ENCODE measurements at regions of chr18 and their contacts with region 1.

Region 1: GRCh38 chr18:45621061-45621511 is 5.8 kb downstream of the SLC14A2 start:
- DNase-seq: peak in 13 of 14 experiments; percentile 2 to 67 (median 23)
- ATAC-seq: peak; percentile 55
- H3K4me3 ChIP-seq: no peak overlapping the region
- H3K4me3 Mint-ChIP-seq: no peak overlapping the region
- H3K27ac ChIP-seq: no peak overlapping the region
- H3K27ac Mint-ChIP-seq: no peak overlapping the region
- H3K4me1 ChIP-seq: no peaks in the 10 kb centered on the region
- H3K4me1 Mint-ChIP-seq: no peaks in the 10 kb centered on the region
- H3K27me3 ChIP-seq: peaks cover 0 to 2% of the 10 kb centered on the region in 2 experiments
- H3K27me3 Mint-ChIP-seq: no peaks in the 10 kb centered on the region
- CTCF ChIP-seq: peak; percentile 90

Region 2: GRCh38 chr18:45639408-45639807 is 18.3 kb after region 1 on chr18:
- CTCF ChIA-PET with region 1: no interaction called
- POLR2A ChIA-PET with region 1: no interaction called
- intact Hi-C with region 1: no loop called
- DNase-seq: no peak
- ATAC-seq: no peak
- H3K4me3 ChIP-seq: no peak overlapping the region
- H3K4me3 Mint-ChIP-seq: no peak overlapping the region
- H3K27ac ChIP-seq: no peak overlapping the region
- H3K27ac Mint-ChIP-seq: no peak overlapping the region
- H3K4me1 ChIP-seq: no peaks in the 10 kb centered on the region
- H3K4me1 Mint-ChIP-seq: no peaks in the 10 kb centered on the region
- H3K27me3 ChIP-seq: no peaks in the 10 kb centered on the region
- H3K27me3 Mint-ChIP-seq: peaks cover 5% of the 10 kb centered on the region
- CTCF ChIP-seq: no peak

Region 3: GRCh38 chr18:45879681-45880655 is 258.9 kb after region 1 on chr18:
- CTCF ChIA-PET with region 1: interaction called, 6 read pairs
- POLR2A ChIA-PET with region 1: no interaction called
- intact Hi-C with region 1: loop called in 1 of 2 experiments (anchors 2 kb)
- DNase-seq: peak; percentile 39 to 84 (median 69)
- ATAC-seq: peak; percentile 96
- H3K4me3 ChIP-seq: no peak overlapping the region
- H3K4me3 Mint-ChIP-seq: no peak overlapping the region
- H3K27ac ChIP-seq: no peak overlapping the region
- H3K27ac Mint-ChIP-seq: peak overlapping the region; percentile 2
- H3K4me1 ChIP-seq: peaks cover 10% of the 10 kb centered on the region
- H3K4me1 Mint-ChIP-seq: peaks cover 19% of the 10 kb centered on the region
- H3K27me3 ChIP-seq: no peaks in the 10 kb centered on the region
- H3K27me3 Mint-ChIP-seq: no peaks in the 10 kb centered on the region
- CTCF ChIP-seq: peak; percentile 99

Region 4: DNA sequence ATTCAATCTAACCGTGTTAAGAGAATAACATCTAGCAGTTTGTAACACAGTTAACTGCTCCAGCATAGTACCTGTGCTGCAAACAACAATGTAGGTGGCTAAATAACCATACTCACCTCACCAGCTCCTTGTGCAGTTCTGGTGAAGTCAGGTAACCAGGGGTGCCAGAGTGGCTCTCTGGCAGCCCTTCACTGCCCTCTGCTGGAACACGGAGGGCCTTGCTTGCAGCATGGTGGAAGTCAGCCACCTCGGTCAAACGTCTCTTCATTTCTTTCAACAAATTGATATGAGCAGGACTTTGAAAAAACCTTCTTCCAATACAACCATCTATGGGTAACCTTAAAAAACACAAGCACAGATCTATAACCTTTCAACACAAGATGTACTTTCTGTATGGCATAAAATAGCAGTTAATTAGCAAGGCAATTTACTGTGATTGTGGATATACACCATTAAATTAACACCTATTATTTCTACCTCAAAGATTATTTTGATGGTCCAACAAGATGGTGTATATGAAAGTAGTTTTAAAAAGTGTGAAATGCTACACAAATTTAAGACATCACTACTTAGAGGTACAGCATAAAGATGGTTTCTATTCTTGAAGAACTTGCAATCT is 289.4 kb after region 1 on chr18:
- CTCF ChIA-PET with region 1: no interaction called
- POLR2A ChIA-PET with region 1: no interaction called
- intact Hi-C with region 1: loop called in 1 of 2 experiments (anchors 1 kb)
- DNase-seq: peak; percentile 39 to 78 (median 56)
- ATAC-seq: peak; percentile 81
- H3K4me3 ChIP-seq: no peak overlapping the region
- H3K4me3 Mint-ChIP-seq: no peak overlapping the region
- H3K27ac ChIP-seq: no peak overlapping the region
- H3K27ac Mint-ChIP-seq: no peak overlapping the region
- H3K4me1 ChIP-seq: no peaks in the 10 kb centered on the region
- H3K4me1 Mint-ChIP-seq: no peaks in the 10 kb centered on the region
- H3K27me3 ChIP-seq: no peaks in the 10 kb centered on the region
- H3K27me3 Mint-ChIP-seq: no peaks in the 10 kb centered on the region
- CTCF ChIP-seq: peak; percentile 69

Region 5: DNA sequence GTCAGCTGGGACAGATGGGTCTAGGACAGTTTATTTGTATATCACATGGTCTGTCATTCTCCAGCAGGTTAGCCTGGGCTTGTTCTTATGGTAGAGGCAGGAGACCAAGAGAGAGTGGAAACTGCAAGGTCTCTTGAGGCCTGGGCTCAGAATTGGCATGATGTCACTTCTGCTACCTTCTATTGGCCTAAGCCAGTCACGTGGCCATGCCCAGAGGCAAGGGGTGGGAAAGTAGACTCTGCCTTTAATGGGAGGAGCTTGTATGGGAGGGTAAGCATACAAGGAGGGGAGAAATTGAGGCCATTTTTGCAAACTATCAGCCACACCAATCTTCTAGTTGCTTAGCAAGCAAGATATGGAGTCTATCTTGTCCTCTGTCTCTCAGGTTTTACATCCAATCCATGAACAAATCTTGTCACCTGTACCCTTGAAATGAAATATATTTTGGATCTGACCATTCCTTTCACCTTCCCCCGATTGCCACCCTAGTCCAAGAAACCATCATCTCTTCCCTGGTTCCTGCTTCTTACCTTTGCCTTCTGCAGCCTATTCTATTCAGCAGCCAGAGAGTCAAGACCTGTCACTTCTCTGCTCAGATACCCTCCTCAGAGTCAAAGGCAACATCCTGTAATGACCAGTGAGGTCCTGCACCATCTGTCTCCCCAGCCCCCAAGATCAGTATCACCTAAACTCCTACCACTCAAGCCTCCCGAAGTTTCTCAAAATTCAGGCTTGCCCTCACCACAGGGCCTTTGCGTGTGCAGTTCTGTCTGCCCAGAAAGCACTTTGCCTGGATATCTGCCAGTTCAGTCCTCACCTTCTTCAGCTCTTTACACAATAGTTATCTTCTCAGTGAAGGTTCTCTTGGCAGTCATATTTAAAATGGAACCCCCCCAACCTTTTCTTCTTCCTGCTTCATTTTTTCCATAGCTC is 795.9 kb after region 1 on chr18:
- CTCF ChIA-PET with region 1: no interaction called
- POLR2A ChIA-PET with region 1: no interaction called
- intact Hi-C with region 1: no loop called
- DNase-seq: no peak
- ATAC-seq: no peak
- H3K4me3 ChIP-seq: no peak overlapping the region
- H3K4me3 Mint-ChIP-seq: no peak overlapping the region
- H3K27ac ChIP-seq: no peak overlapping the region
- H3K27ac Mint-ChIP-seq: no peak overlapping the region
- H3K4me1 ChIP-seq: peaks cover 5% of the 10 kb centered on the region
- H3K4me1 Mint-ChIP-seq: no peaks in the 10 kb centered on the region
- H3K27me3 ChIP-seq: no peaks in the 10 kb centered on the region
- H3K27me3 Mint-ChIP-seq: no peaks in the 10 kb centered on the region
- CTCF ChIP-seq: no peak